ENCODE measurements at regions of chr9 and their contacts with region 1.

Region 1: DNA sequence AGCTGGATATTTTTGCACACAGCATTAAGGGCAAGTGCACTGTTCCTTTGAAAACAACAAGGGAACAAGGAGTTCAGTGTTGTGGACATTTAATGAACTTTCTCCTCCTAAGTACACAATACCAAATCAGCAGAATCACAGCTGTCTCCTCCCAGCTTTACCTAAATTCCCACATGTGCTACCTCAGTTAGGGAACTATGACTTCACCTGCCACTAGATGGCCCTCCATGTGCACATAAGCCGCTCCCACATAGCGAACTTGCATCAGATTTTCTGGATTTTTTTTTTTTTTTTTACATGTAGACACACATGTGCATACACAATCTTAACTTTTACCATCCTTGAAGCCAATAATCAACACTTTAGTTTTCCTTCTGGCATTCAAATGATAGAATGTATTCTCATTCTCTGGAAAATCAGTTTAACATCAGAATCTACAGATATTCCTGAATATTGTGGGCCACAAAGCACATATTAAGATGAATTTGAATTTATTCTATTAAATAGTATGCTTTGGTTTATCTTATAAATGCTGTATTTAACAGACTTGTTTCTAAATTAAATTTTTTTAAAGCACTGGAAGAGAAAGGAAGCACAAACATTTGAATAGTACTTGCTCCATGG is 123.6 kb downstream of the PALM2AKAP2 start:
- DNase-seq: no peak
- H3K4me3 ChIP-seq: no peak overlapping the region
- CTCF ChIP-seq: peak; percentile 72

Region 2: GRCh38 chr9:109574068-109574882 is 329.4 kb before region 1 on chr9:
- CTCF ChIA-PET with region 1: interaction called, 14 read pairs
- POLR2A ChIA-PET with region 1: no interaction called
- DNase-seq: peak; percentile 3
- H3K4me3 ChIP-seq: no peak overlapping the region
- CTCF ChIP-seq: peak; percentile 62

Region 3: GRCh38 chr9:109831998-109832658 is 71.5 kb before region 1 on chr9:
- CTCF ChIA-PET with region 1: no interaction called
- POLR2A ChIA-PET with region 1: no interaction called
- DNase-seq: no peak
- H3K4me3 ChIP-seq: no peak overlapping the region
- CTCF ChIP-seq: no peak

Region 4: GRCh38 chr9:109919736-109920408 is 16.2 kb after region 1 on chr9:
- CTCF ChIA-PET with region 1: interaction called, 10 read pairs
- POLR2A ChIA-PET with region 1: interaction called, 4 read pairs
- DNase-seq: no peak
- H3K4me3 ChIP-seq: no peak overlapping the region
- CTCF ChIP-seq: no peak

Region 5: DNA sequence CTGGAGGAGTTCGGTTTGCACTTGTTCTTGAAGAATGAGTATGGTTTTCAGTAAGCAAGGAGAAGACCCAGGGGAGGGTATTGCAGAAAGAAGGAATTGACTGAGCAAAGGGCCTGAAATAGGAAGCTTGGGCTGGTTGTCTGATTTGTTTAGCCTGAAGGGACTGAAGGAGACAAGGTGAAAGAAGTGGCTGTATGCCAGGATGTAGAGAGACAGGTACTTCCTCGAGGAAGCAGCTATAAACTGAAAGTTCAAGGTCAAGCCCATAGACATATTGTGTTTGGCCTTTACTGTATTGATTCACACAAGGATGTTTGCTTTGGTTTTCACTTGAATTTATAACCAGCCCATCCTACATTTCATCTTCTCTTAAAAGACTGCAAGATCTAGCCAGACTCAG is 59.5 kb after region 1 on chr9:
- CTCF ChIA-PET with region 1: no interaction called
- POLR2A ChIA-PET with region 1: no interaction called
- DNase-seq: no peak
- H3K4me3 ChIP-seq: no peak overlapping the region
- CTCF ChIP-seq: no peak

Region 6: DNA sequence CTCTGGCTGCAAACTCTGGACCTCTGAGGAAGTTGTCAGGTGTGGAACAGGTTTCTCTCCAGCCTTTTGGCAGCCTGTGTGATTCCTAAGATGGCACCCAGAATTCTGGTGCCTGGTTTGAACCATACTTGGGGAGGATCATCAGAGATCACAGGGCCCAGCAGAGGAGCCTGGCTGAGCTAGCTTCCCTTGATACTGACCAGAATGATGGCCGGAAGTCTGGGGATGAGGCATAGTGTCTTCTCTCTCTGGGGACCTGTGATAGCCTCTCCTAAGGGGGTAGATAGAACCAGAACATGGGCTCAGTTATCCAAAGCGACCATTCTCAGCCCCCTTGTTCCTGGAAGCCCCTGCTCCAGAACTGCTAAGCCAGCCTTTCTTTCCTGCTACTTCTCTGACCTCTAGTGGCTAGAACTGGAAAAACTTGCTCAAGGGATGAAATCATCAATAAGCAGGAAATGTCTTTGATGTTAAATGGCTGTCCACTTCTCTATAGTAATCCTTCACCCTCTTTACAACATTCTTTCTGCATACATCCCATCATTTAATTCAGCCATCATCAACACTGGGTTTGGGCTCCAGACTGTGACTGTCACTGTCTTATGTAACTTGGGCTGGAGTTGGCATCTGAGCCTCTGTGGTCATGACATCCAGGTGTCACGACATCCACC is 249.2 kb after region 1 on chr9:
- CTCF ChIA-PET with region 1: interaction called, 142 read pairs
- POLR2A ChIA-PET with region 1: no interaction called
- DNase-seq: no peak
- H3K4me3 ChIP-seq: no peak overlapping the region
- CTCF ChIP-seq: peak; percentile 59

Region 7: GRCh38 chr9:110192531-110193261 is 289.1 kb after region 1 on chr9:
- CTCF ChIA-PET with region 1: interaction called, 15 read pairs
- POLR2A ChIA-PET with region 1: no interaction called
- DNase-seq: peak; percentile 71
- H3K4me3 ChIP-seq: no peak overlapping the region
- CTCF ChIP-seq: no peak